Activated CD4-positive, alpha-beta T cell treated with anti-CD3 and anti-CD28 coated beads, Interleukin-2, amount 10 ng/mL, durations not matched to agents 24 days and 14 days (primary cell): ENCODE measurements at regions of chr1 and their contacts with region 1.

Region 1: GRCh38 chr1:28926629-28927265 is 12.4 kb downstream of the EPB41 start:
- DNase-seq: peak; percentile 89
- H3K4me3 Mint-ChIP-seq: peak overlapping the region; percentile 73
- H3K27ac Mint-ChIP-seq: peak overlapping the region; percentile 89
- H3K4me1 Mint-ChIP-seq: peaks cover 41% of the 10 kb centered on the region
- H3K27me3 Mint-ChIP-seq: no peaks in the 10 kb centered on the region

Region 2: GRCh38 chr1:28965271-28965870 is 38.6 kb after region 1 on chr1:
- intact Hi-C with region 1: loop called (anchors 1 kb)
- DNase-seq: no peak
- H3K4me3 Mint-ChIP-seq: no peak overlapping the region
- H3K27ac Mint-ChIP-seq: no peak overlapping the region
- H3K4me1 Mint-ChIP-seq: peaks cover 30% of the 10 kb centered on the region
- H3K27me3 Mint-ChIP-seq: no peaks in the 10 kb centered on the region

Region 3: GRCh38 chr1:29569971-29570634 is 643.4 kb after region 1 on chr1:
- intact Hi-C with region 1: no loop called
- DNase-seq: no peak
- H3K4me3 Mint-ChIP-seq: no peak overlapping the region
- H3K27ac Mint-ChIP-seq: no peak overlapping the region
- H3K4me1 Mint-ChIP-seq: no peaks in the 10 kb centered on the region
- H3K27me3 Mint-ChIP-seq: peaks cover 3% of the 10 kb centered on the region